ENCODE measurements at regions of chr5 and their contacts with region 1.

Region 1: DNA sequence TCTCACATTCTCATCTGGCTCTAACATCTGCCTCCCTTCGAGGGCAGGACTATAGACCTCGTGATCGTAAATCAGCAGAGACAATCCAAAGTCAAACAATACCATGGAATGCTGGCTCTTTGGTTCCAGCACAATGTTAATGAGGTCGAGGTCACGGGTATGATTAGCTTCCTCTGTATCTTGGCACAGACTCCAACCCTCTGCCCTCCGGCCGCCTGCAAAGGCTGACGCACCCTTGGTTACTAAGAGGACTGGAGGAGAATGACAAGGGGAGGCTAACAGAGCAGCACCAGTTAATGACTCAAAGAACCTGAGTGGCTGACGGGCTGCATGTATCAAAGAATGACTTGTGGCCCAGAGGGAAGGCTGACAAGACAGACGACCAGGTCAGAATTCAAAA is 10.1 kb downstream of the LHFPL2 start:
- DNase-seq: no peak
- H3K4me3 ChIP-seq: no peak overlapping the region
- H3K27ac ChIP-seq: no peak overlapping the region
- H3K4me1 ChIP-seq: peaks cover 30% of the 10 kb centered on the region
- CTCF ChIP-seq: no peak

Region 2: GRCh38 chr5:78574731-78575161 is 63.7 kb before region 1 on chr5:
- CTCF ChIA-PET with region 1: no interaction called
- POLR2A ChIA-PET with region 1: no interaction called
- intact Hi-C with region 1: no loop called
- DNase-seq: peak; percentile 13
- H3K4me3 ChIP-seq: no peak overlapping the region
- H3K27ac ChIP-seq: peak overlapping the region; percentile 38
- H3K4me1 ChIP-seq: peaks cover 24% of the 10 kb centered on the region
- CTCF ChIP-seq: no peak

Region 3: DNA sequence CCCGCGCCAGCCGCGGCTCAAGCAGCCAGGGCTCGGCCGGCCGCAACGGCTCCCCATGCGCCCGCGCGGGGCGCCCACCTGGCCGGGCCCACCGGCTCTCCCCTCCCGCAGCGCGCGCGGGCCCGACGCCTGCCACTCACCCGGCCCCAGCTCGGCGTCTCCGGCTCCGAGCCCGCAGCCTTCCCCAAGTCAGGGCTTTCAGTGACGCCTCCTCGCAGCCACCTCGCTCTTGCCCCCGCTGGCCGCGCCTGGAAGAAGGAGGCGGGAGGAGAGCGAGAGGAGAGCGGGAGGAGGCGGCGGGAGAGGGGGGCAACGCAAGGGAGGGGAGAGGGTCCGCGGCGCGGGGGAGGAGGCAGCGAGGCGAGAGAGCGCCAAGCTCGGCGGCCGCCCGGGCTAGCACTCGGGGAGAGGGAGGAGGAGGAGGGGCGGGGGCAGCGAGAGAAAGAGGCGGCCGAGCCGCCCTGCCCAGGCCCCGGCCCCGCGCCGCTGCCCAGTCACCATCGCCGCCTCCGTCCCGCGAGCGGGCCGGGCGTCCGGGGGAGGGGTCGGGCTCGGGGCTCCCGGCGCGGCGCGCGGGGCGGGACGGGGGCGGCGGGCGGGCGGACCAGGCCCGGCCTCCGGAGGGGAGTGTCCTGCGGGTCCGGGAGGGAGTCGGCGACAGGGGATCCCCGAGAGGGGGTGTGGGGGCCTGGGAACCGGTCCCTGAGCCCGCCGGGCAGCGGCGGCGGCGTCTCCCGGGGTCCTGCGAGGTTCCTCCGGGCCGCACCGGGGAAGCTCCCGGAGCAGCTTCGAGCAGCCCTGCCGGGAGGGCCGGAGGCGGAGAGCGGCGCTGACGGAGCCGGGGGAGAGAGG is 10.2 kb after region 1 on chr5 and contains the start of gene LHFPL2:
- CTCF ChIA-PET with region 1: no interaction called
- POLR2A ChIA-PET with region 1: interaction called, 12 read pairs
- intact Hi-C with region 1: no loop called
- DNase-seq: peak; percentile 75
- H3K4me3 ChIP-seq: peak within 1 kb of the TSS; percentile 77
- H3K27ac ChIP-seq: peak within 1 kb of the TSS; percentile 20
- H3K4me1 ChIP-seq: peaks cover 31% of the 10 kb centered on the region
- CTCF ChIP-seq: 0 out of 2 replicates have a peak, but pooled peaks have one; percentile 39
- total RNA-seq, gene LHFPL2: 8.4 and 12.2 TPM in 2 replicates